Activated B cell treated with CpG ODN at 0.5 μM for 24 hours (primary cell): ENCODE measurements at regions of chr4 and their contacts with region 1.

Region 1: GRCh38 chr4:22688236-22688635 is 4.5 kb upstream of the GBA3 start:
- DNase-seq: no peak
- ATAC-seq: no peak
- H3K4me3 Mint-ChIP-seq: no peak overlapping the region
- H3K27ac Mint-ChIP-seq: no peak overlapping the region
- H3K4me1 Mint-ChIP-seq: no peaks in the 10 kb centered on the region
- H3K27me3 Mint-ChIP-seq: no peaks in the 10 kb centered on the region
- CTCF ChIP-seq: no peak

Region 2: GRCh38 chr4:21790438-21791029 is 897.7 kb before region 1 on chr4:
- CTCF ChIA-PET with region 1: interaction called, 5 read pairs
- POLR2A ChIA-PET with region 1: no interaction called
- intact Hi-C with region 1: loop called (anchors 1 kb)
- DNase-seq: no peak
- ATAC-seq: no peak
- H3K4me3 Mint-ChIP-seq: no peak overlapping the region
- H3K27ac Mint-ChIP-seq: no peak overlapping the region
- H3K4me1 Mint-ChIP-seq: no peaks in the 10 kb centered on the region
- H3K27me3 Mint-ChIP-seq: no peaks in the 10 kb centered on the region
- CTCF ChIP-seq: no peak

Region 3: DNA sequence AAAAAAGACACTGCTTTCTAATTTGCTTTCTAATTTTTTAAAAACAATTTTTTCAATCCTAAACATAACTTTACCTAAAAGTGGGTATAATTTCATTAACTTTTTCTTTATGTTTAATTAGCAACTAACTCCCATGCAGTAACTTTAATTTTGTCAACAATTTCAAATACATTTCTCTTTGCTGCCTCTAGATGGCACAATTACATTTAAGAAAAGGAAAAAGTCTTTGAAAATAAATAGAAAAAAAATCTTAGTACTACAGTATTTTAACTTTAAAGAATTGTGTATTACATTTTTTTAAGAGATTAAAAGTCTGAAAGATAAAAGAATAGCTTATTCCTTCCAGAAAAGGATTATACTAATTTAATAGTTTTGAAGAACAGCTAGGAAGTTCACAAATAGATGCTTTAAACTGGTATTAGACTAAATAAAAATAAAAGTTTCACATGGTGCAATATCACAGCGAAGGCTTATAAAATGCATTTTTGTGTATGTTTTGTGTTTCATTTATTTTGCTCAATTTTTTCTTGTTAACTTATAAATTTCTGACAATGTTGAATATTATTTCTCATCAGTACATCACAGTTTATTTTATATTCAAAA is 277.5 kb before region 1 on chr4:
- CTCF ChIA-PET with region 1: interaction called, 6 read pairs
- POLR2A ChIA-PET with region 1: no interaction called
- intact Hi-C with region 1: loop called (anchors 1 kb)
- DNase-seq: no peak
- ATAC-seq: no peak
- H3K4me3 Mint-ChIP-seq: no peak overlapping the region
- H3K27ac Mint-ChIP-seq: no peak overlapping the region
- H3K4me1 Mint-ChIP-seq: no peaks in the 10 kb centered on the region
- H3K27me3 Mint-ChIP-seq: no peaks in the 10 kb centered on the region
- CTCF ChIP-seq: peak; percentile 33

Region 4: DNA sequence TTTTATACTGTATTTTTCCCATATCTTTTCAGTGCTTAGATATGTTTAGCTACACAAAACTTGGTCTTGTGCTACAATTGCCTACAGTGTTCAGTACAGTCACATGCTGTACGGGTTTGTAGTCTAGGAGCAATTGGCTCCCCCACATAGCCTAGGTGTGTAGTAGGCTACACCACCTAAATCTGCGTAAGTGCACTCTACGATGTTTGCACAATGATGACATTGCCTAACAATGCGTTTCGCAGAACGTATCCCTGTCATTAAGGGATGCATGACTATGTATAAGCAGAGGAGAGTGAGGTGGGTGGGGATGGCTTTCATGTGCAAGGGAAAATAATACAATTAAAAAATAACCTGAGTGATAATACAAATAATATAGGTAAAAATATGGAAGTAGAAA is 135.9 kb after region 1 on chr4:
- CTCF ChIA-PET with region 1: no interaction called
- POLR2A ChIA-PET with region 1: no interaction called
- intact Hi-C with region 1: no loop called
- DNase-seq: no peak
- ATAC-seq: no peak
- H3K4me3 Mint-ChIP-seq: no peak overlapping the region
- H3K27ac Mint-ChIP-seq: no peak overlapping the region
- H3K4me1 Mint-ChIP-seq: no peaks in the 10 kb centered on the region
- H3K27me3 Mint-ChIP-seq: no peaks in the 10 kb centered on the region
- CTCF ChIP-seq: no peak